K562 (cell line): ENCODE measurements at regions of chr1 and their contacts with region 1.

Region 1: GRCh38 chr1:89994805-89995597 is at the start of gene ZNF326:
- DNase-seq: peak; percentile 97 to 99 (median 99)
- ATAC-seq: peak; percentile 97
- H3K4me3 ChIP-seq: peak within 1 kb of the TSS; percentile 83
- H3K27ac ChIP-seq: peak within 1 kb of the TSS; percentile 94
- H3K4me1 ChIP-seq: peaks cover 21 to 30% of the 10 kb centered on the region in 2 experiments
- H3K27me3 ChIP-seq: no peaks in the 10 kb centered on the region
- CTCF ChIP-seq: peak in 2 of 3 experiments; percentile 2 to 7; a peak in 1 of 6 replicates
- EP300 ChIP-seq: no peak
- POLR2A ChIP-seq: peak; percentile 97
- RAD21 ChIP-seq: no peak
- polyA plus RNA-seq, gene ZNF326: 7.3 to 7.7 TPM

Region 2: DNA sequence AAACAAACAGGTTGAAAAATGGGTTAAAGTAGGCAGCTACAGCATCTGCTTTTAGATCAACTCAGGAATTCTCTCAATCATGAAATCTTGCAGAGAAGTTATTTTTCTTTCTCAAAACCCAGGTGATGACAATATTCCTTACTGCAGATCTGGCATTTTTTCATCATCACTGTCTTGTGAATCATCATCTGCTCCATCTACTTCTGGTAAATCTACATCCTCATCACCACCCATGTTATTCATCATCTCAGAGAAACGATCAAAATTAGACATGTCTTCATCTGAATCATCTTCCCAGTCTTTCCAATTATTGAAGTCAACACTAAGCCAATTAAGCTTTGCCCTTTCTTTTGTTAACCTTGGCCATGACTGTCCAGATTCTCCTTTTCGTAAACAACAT is 890.9 kb before region 1 on chr1:
- CTCF ChIA-PET with region 1: no interaction called
- POLR2A ChIA-PET with region 1: no interaction called
- in situ Hi-C with region 1: loop called (anchors 25 kb)
- intact Hi-C with region 1: no loop called
- DNase-seq: no peak
- ATAC-seq: no peak
- H3K4me3 ChIP-seq: no peak overlapping the region
- H3K27ac ChIP-seq: no peak overlapping the region
- H3K4me1 ChIP-seq: no peaks in the 10 kb centered on the region
- H3K27me3 ChIP-seq: no peaks in the 10 kb centered on the region
- CTCF ChIP-seq: no peak
- EP300 ChIP-seq: no peak
- POLR2A ChIP-seq: no peak
- RAD21 ChIP-seq: no peak

Region 3: GRCh38 chr1:89812992-89813391 is 182.0 kb before region 1 on chr1:
- CTCF ChIA-PET with region 1: no interaction called
- POLR2A ChIA-PET with region 1: no interaction called
- in situ Hi-C with region 1: no loop called
- intact Hi-C with region 1: no loop called
- DNase-seq: no peak
- ATAC-seq: no peak
- H3K4me3 ChIP-seq: no peak overlapping the region
- H3K27ac ChIP-seq: no peak overlapping the region
- H3K4me1 ChIP-seq: peaks cover 0 to 11% of the 10 kb centered on the region in 2 experiments; a peak in 2 of 5 replicates
- H3K27me3 ChIP-seq: no peaks in the 10 kb centered on the region
- CTCF ChIP-seq: no peak
- EP300 ChIP-seq: no peak
- POLR2A ChIP-seq: no peak
- RAD21 ChIP-seq: no peak

Region 4: GRCh38 chr1:90277270-90277669 is 282.3 kb after region 1 on chr1:
- CTCF ChIA-PET with region 1: no interaction called
- POLR2A ChIA-PET with region 1: no interaction called
- in situ Hi-C with region 1: no loop called
- intact Hi-C with region 1: no loop called
- DNase-seq: no peak
- ATAC-seq: no peak
- H3K4me3 ChIP-seq: no peak overlapping the region
- H3K27ac ChIP-seq: no peak overlapping the region
- H3K4me1 ChIP-seq: no peaks in the 10 kb centered on the region
- H3K27me3 ChIP-seq: no peaks in the 10 kb centered on the region
- CTCF ChIP-seq: no peak
- EP300 ChIP-seq: no peak
- POLR2A ChIP-seq: no peak
- RAD21 ChIP-seq: no peak